ENCODE measurements at regions of chr1 and their contacts with region 1.

Region 1: GRCh38 chr1:68120136-68120791 is 69.8 kb upstream of the DIRAS3 start:
- DNase-seq: peak; percentile 56
- H3K4me3 ChIP-seq: no peak overlapping the region; a peak in 1 of 4 replicates
- H3K27ac ChIP-seq: peak overlapping the region in 1 of 2 experiments; percentile 61; a peak in 1 of 4 replicates
- H3K4me1 ChIP-seq: peaks cover 0 to 4% of the 10 kb centered on the region in 2 experiments; a peak in 3 of 4 replicates
- H3K27me3 ChIP-seq: no peaks in the 10 kb centered on the region
- CTCF ChIP-seq: peak; percentile 88
- EP300 ChIP-seq: no peak
- RAD21 ChIP-seq: peak; percentile 95

Region 2: GRCh38 chr1:67824766-67825165 is 295.5 kb before region 1 on chr1:
- CTCF ChIA-PET with region 1: no interaction called
- POLR2A ChIA-PET with region 1: no interaction called
- DNase-seq: no peak
- H3K4me3 ChIP-seq: no peak overlapping the region
- H3K27ac ChIP-seq: no peak overlapping the region
- H3K4me1 ChIP-seq: no peaks in the 10 kb centered on the region; a peak in 1 of 4 replicates
- H3K27me3 ChIP-seq: no peaks in the 10 kb centered on the region
- CTCF ChIP-seq: no peak
- EP300 ChIP-seq: no peak
- RAD21 ChIP-seq: no peak

Region 3: DNA sequence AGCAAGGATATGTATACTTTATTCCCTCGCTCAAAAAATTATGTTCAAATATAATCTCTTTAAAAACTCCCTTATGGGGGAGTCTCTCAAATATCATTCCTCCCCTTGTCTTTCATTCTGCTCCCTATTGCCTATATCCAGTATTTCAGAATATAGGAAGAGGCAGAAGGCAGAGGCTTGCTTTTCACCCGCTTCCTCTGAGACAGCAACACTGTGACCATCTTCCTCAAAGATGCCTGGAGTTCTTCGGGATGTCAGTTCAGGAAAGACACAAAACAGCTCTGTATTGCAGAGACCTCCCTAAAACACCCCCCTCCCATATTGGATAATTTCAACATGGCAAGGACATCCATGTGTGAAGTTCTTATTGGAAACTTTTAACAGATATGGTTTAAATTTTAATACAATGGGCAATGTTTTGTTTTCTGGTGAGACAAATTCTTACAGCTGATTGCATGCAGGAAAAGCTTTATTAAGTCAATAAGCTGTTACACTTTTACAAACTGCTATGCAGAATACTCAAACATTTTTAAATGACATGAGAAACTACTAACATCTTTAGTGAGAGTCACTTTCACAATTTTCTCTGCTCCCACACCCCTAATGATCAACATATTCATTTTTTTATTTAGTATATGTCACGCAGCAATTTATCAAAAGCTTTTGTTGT is 74.6 kb before region 1 on chr1:
- CTCF ChIA-PET with region 1: no interaction called
- POLR2A ChIA-PET with region 1: no interaction called
- DNase-seq: no peak
- H3K4me3 ChIP-seq: no peak overlapping the region
- H3K27ac ChIP-seq: no peak overlapping the region
- H3K4me1 ChIP-seq: no peaks in the 10 kb centered on the region; a peak in 1 of 4 replicates
- H3K27me3 ChIP-seq: no peaks in the 10 kb centered on the region
- CTCF ChIP-seq: no peak
- EP300 ChIP-seq: no peak
- RAD21 ChIP-seq: no peak

Region 4: GRCh38 chr1:68103884-68104554 is 16.2 kb before region 1 on chr1:
- CTCF ChIA-PET with region 1: interaction called, 16 read pairs
- POLR2A ChIA-PET with region 1: no interaction called
- DNase-seq: no peak
- H3K4me3 ChIP-seq: no peak overlapping the region
- H3K27ac ChIP-seq: peak overlapping the region in 1 of 2 experiments; percentile 81; a peak in 2 of 4 replicates
- H3K4me1 ChIP-seq: peaks cover 0 to 11% of the 10 kb centered on the region in 2 experiments; a peak in 2 of 4 replicates
- H3K27me3 ChIP-seq: no peaks in the 10 kb centered on the region
- CTCF ChIP-seq: no peak
- EP300 ChIP-seq: peak in 1 of 2 experiments; percentile 16; a peak in 1 of 4 replicates
- RAD21 ChIP-seq: no peak

Region 5: GRCh38 chr1:68141071-68142021 is 21.1 kb after region 1 on chr1:
- CTCF ChIA-PET with region 1: interaction called, 15 read pairs
- POLR2A ChIA-PET with region 1: no interaction called
- DNase-seq: no peak
- H3K4me3 ChIP-seq: no peak overlapping the region
- H3K27ac ChIP-seq: no peak overlapping the region
- H3K4me1 ChIP-seq: no peaks in the 10 kb centered on the region
- H3K27me3 ChIP-seq: no peaks in the 10 kb centered on the region
- CTCF ChIP-seq: no peak
- EP300 ChIP-seq: no peak
- RAD21 ChIP-seq: no peak

Region 6: DNA sequence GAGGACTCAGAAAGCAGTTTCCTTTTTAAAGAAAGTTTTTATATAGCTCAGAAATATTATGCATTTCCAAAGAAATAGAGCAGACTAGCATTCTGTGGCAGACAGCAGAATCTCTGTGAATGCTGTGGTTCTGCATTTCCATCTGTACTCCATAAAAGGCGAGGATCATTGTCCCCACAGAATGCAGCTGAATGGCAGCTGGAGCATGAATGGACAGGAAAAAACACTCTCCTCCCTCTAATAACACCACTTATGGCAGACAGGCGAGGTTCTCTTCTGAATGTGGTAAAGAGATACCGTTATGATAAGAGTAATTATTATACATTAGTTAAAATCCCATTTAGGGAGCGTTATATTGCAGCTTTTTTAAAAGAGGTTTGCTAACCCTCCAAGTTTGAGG is 193.5 kb after region 1 on chr1:
- CTCF ChIA-PET with region 1: interaction called, 101 read pairs
- POLR2A ChIA-PET with region 1: no interaction called
- DNase-seq: peak; percentile 43
- H3K4me3 ChIP-seq: no peak overlapping the region; a peak in 1 of 4 replicates
- H3K27ac ChIP-seq: peak overlapping the region in 1 of 2 experiments; percentile 61; a peak in 2 of 4 replicates
- H3K4me1 ChIP-seq: peaks cover 5 to 10% of the 10 kb centered on the region in 2 experiments; a peak in 3 of 4 replicates
- H3K27me3 ChIP-seq: no peaks in the 10 kb centered on the region
- CTCF ChIP-seq: no peak
- EP300 ChIP-seq: no peak
- RAD21 ChIP-seq: no peak

Region 7: GRCh38 chr1:68331117-68331865 is 211.0 kb after region 1 on chr1:
- CTCF ChIA-PET with region 1: interaction called, 16 read pairs
- POLR2A ChIA-PET with region 1: no interaction called
- DNase-seq: no peak
- H3K4me3 ChIP-seq: no peak overlapping the region
- H3K27ac ChIP-seq: peak overlapping the region in 1 of 2 experiments; percentile 28; a peak in 1 of 4 replicates
- H3K4me1 ChIP-seq: peaks cover 0 to 10% of the 10 kb centered on the region in 2 experiments; a peak in 1 of 4 replicates
- H3K27me3 ChIP-seq: no peaks in the 10 kb centered on the region
- CTCF ChIP-seq: no peak
- EP300 ChIP-seq: peak in 1 of 2 experiments; percentile 34; a peak in 1 of 4 replicates
- RAD21 ChIP-seq: no peak

Region 8: GRCh38 chr1:68358439-68358838 is 238.2 kb after region 1 on chr1:
- CTCF ChIA-PET with region 1: interaction called, 477 read pairs
- POLR2A ChIA-PET with region 1: no interaction called
- DNase-seq: no peak
- H3K4me3 ChIP-seq: no peak overlapping the region
- H3K27ac ChIP-seq: no peak overlapping the region
- H3K4me1 ChIP-seq: no peaks in the 10 kb centered on the region
- H3K27me3 ChIP-seq: no peaks in the 10 kb centered on the region
- CTCF ChIP-seq: no peak
- EP300 ChIP-seq: no peak
- RAD21 ChIP-seq: no peak